Activated CD4-positive, alpha-beta memory T cell treated with anti-CD3 and anti-CD28 coated beads for 36 hours (primary cell): ENCODE measurements at regions of chr20 and their contacts with region 1.

Region 1: GRCh38 chr20:54284934-54285704 is 77.2 kb downstream of the PFDN4 start:
- DNase-seq: peak; percentile 56
- H3K4me3 Mint-ChIP-seq: peak overlapping the region; percentile 58
- H3K27ac Mint-ChIP-seq: peak overlapping the region; percentile 92
- H3K4me1 Mint-ChIP-seq: peaks cover 17% of the 10 kb centered on the region
- H3K27me3 Mint-ChIP-seq: peaks cover 9% of the 10 kb centered on the region

Region 2: GRCh38 chr20:54207743-54208547 is 77.2 kb before region 1 on chr20 and contains the start of gene PFDN4:
- CTCF ChIA-PET with region 1: interaction called, 3 read pairs
- POLR2A ChIA-PET with region 1: no interaction called
- intact Hi-C with region 1: loop called (anchors 5 kb)
- DNase-seq: peak; percentile 88
- H3K4me3 Mint-ChIP-seq: peak within 1 kb of the TSS; percentile 95
- H3K27ac Mint-ChIP-seq: peak within 1 kb of the TSS; percentile 99
- H3K4me1 Mint-ChIP-seq: peaks cover 50% of the 10 kb centered on the region
- H3K27me3 Mint-ChIP-seq: peaks cover 2% of the 10 kb centered on the region
- total RNA-seq, gene PFDN4: 38.4 to 40.3 TPM

Region 3: GRCh38 chr20:54320115-54320607 is 35.0 kb after region 1 on chr20:
- CTCF ChIA-PET with region 1: no interaction called
- POLR2A ChIA-PET with region 1: no interaction called
- intact Hi-C with region 1: loop called (anchors 2 kb)
- DNase-seq: no peak
- H3K4me3 Mint-ChIP-seq: no peak overlapping the region
- H3K27ac Mint-ChIP-seq: peak overlapping the region; percentile 19
- H3K4me1 Mint-ChIP-seq: peaks cover 17% of the 10 kb centered on the region
- H3K27me3 Mint-ChIP-seq: peaks cover 17% of the 10 kb centered on the region